Activated CD4-positive, alpha-beta memory T cell treated with anti-CD3 and anti-CD28 coated beads, Interleukin-2, amount 10 ng/mL, durations not matched to agents 7 days and 5 days (primary cell): ENCODE measurements at regions of chr1 and their contacts with region 1.

Region 1: DNA sequence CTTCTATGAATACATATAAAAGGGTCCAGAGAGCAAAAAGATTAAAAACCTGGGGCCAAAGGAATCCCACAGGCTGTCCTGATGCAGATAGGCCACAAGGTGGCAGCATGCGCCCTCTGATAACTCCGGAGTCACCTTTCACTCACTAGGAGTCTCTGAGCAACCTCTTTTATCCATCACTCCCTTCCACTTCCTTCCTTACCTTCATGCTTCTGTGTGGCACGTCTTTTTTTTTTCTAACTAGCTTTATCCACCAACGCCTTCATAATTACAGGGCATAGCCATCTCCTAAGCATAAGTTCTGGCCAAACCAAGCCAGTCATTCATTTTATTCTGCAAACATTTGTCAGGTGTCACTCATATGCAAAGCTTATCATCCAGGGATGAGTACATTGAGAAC is 3.9 kb upstream of the PGLYRP4 start:
- DNase-seq: peak; percentile 71
- H3K4me3 Mint-ChIP-seq: no peak overlapping the region
- H3K27ac Mint-ChIP-seq: no peak overlapping the region
- H3K4me1 Mint-ChIP-seq: peaks cover 4% of the 10 kb centered on the region
- H3K27me3 Mint-ChIP-seq: peaks cover 17% of the 10 kb centered on the region

Region 2: GRCh38 chr1:153322568-153322967 is 30.0 kb before region 1 on chr1:
- CTCF ChIA-PET with region 1: no interaction called
- POLR2A ChIA-PET with region 1: no interaction called
- DNase-seq: no peak
- H3K4me3 Mint-ChIP-seq: no peak overlapping the region
- H3K27ac Mint-ChIP-seq: no peak overlapping the region
- H3K4me1 Mint-ChIP-seq: no peaks in the 10 kb centered on the region
- H3K27me3 Mint-ChIP-seq: peaks cover 19% of the 10 kb centered on the region

Region 3: DNA sequence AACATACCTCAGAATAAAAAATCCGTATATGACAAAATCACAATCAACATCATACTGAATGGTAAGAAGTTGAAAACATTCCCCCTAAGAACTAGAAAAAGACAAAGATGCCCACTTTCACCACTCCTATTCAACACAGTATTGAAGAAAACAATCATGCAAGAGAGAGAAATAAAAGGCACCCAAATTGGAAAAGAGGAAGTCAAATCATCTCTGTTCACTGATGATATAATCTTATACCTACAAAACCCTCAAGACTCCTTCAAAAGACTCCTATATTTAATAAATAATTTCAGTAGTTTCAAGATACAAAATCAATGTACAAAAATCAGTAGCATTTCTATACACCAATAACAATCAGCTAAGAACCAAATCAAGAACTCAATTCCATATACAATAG is 18.6 kb before region 1 on chr1:
- CTCF ChIA-PET with region 1: no interaction called
- POLR2A ChIA-PET with region 1: no interaction called
- DNase-seq: no peak
- H3K4me3 Mint-ChIP-seq: no peak overlapping the region
- H3K27ac Mint-ChIP-seq: no peak overlapping the region
- H3K4me1 Mint-ChIP-seq: no peaks in the 10 kb centered on the region
- H3K27me3 Mint-ChIP-seq: peaks cover 29% of the 10 kb centered on the region

Region 4: GRCh38 chr1:153465811-153466636 is 113.5 kb after region 1 on chr1:
- CTCF ChIA-PET with region 1: interaction called, 11 read pairs
- POLR2A ChIA-PET with region 1: no interaction called
- DNase-seq: peak; percentile 67
- H3K4me3 Mint-ChIP-seq: no peak overlapping the region
- H3K27ac Mint-ChIP-seq: no peak overlapping the region
- H3K4me1 Mint-ChIP-seq: peaks cover 5% of the 10 kb centered on the region
- H3K27me3 Mint-ChIP-seq: peaks cover 29% of the 10 kb centered on the region

Region 5: DNA sequence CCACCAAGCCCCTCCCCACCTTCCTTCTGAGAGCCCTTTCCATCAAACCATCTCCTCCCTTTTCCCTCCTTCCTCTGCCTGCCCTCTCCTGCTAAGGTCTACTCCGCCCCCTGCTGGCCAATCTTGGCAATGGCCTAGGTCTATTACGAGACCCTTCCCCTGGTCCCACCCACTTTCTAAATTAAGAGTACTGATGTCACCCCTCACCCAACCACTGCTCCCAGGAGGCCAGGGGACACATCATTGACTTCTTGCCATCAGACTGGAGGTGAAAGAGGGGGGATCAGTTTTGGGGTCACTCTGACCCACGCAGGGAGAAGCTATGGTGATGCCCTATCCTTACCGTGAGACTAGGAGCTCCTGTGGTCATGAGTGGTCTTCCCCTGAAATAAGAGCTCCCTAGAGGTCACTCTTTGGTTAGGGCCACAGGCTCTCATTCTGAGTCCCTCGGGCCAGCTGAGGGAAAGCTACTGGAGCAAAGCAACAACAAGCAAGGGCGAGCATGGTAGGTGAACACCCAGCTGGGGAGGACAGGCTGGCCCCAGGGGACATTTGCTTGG is 142.5 kb after region 1 on chr1:
- CTCF ChIA-PET with region 1: interaction called, 71 read pairs
- POLR2A ChIA-PET with region 1: no interaction called
- DNase-seq: peak; percentile 74
- H3K4me3 Mint-ChIP-seq: no peak overlapping the region
- H3K27ac Mint-ChIP-seq: no peak overlapping the region
- H3K4me1 Mint-ChIP-seq: no peaks in the 10 kb centered on the region
- H3K27me3 Mint-ChIP-seq: peaks cover 30% of the 10 kb centered on the region